H1 (cell line): ENCODE measurements at regions of chr5 and their contacts with region 1.

Region 1: DNA sequence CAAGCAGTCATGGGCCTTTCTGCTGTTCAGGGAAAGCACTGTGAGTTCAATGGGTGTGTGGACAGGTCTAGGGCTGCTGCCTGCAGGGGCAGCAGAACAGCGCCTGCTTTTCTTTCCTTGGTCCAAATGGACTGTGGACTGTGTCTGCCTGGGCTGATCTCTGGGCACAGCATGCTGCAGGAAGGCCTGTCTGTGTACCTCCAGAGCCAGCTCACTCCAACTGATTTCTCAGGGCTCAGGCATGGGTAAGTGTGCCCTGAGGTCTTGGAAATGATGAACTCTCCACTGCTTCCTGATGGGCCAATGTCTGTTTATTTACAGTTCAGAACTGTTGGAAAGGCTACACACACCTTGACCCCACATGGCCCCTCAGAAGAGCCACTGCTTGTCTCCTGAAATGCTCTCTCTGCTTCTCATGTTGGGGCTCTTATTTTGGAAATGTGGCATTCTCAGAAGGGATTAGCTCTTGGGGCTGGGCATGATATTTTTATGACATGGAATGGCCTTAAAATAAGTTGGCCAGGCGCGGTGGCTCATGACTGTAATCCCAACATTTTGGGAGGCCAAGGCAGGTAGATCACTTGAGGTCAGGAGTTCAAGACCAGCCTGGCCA is 27.0 kb downstream of the SLC22A4 start:
- DNase-seq: no peak
- H3K4me3 ChIP-seq: no peak overlapping the region
- H3K27ac ChIP-seq: no peak overlapping the region
- H3K4me1 ChIP-seq: peaks cover 5 to 10% (median 7%) of the 10 kb centered on the region in 4 experiments
- H3K27me3 ChIP-seq: no peaks in the 10 kb centered on the region
- CTCF ChIP-seq: peak in 1 of 3 experiments; percentile 4; a peak in 1 of 4 replicates
- EP300 ChIP-seq: no peak
- POLR2A ChIP-seq: no peak
- RAD21 ChIP-seq: no peak

Region 2: DNA sequence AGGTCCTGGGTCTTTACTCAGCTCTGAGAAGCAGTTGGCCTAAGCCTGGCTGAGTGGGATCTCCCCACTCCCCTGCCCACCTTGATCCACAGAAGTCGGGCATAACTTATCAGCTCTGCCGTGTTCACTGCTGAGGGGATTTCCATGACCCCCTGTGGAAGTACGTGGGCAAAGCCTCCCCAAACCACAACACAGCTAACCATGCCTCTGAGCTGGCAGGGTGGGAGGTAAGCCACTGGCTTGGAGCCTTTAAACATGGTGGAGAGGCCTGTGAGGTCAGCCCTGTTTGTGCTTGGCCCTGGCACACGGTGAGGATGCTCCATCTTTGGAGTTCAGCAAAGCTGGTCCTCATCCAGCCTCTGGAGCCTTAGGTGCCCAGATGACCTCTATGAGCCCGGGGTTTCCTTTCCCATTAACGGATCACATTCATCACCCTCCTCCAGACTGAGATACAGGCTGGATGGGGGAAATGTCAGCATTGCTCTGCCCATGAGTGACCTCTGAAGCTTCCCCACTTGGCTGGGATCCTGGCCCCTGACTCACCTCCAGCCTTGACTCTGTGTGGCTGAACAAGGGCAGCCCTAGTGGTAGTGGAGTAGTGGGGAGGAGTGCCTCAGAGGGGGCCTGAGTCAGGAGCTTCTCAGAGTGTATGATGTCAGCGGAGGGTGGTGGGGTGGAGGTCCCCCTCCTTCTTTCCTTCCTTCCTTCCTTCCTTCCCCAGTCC is 57.5 kb before region 1 on chr5:
- CTCF ChIA-PET with region 1: no interaction called
- POLR2A ChIA-PET with region 1: no interaction called
- DNase-seq: peak in 1 of 2 experiments; percentile 20
- H3K4me3 ChIP-seq: no peak overlapping the region
- H3K27ac ChIP-seq: no peak overlapping the region
- H3K4me1 ChIP-seq: peaks cover 0 to 7% (median 0%) of the 10 kb centered on the region in 4 experiments; a peak in 1 of 7 replicates
- H3K27me3 ChIP-seq: no peaks in the 10 kb centered on the region; a peak in 2 of 7 replicates
- CTCF ChIP-seq: no peak
- EP300 ChIP-seq: no peak
- POLR2A ChIP-seq: no peak
- RAD21 ChIP-seq: no peak

Region 3: DNA sequence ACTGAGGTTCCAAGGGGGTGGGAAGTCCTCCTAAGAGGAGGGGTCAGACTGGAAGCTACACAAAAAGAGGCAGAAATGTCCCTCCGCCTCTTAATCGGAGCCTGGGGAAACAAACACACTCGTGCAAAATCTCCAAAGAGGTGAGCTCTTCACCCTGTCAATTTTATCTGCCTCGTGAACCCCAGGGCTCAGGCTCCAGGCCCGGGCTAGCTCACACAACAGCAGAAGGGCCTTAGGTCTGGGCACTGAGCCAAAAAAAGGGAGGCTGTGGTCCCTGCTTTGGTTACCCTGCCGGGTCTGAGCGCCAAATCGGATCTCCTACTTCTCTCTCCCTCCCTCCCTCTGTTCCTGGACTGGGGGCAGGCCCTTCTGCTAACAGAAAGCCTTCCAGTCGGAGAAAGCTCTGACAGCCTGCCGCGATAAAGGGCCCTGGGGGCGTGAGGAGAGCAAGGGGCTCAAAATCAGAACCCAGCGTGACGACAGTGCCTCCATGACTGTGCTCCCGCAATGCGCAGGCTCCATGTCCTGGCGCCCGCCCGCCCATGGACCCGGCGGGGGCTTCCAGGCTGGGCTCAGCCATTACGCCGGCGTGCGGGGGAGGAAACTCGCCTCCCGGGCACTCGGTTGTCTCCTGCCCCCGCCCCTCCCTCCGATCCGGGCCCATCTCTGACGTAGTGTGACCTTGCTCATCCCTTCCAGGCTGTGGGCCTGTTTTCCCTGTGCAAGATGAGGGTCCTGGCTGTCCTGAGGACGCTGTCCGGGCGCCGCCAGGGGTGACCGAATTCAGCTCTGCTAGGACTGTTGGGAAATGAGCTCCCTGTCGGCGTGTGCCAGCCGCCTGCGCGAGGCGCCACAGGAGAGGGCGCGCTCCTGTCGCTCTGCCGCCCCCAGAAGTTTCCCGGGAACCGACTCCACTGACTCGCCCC is 27.9 kb before region 1 on chr5:
- CTCF ChIA-PET with region 1: interaction called, 9 read pairs
- POLR2A ChIA-PET with region 1: interaction called, 14 read pairs
- DNase-seq: peak in 1 of 2 experiments; percentile 89
- H3K4me3 ChIP-seq: peak overlapping the region; percentile 53 to 75 (median 65)
- H3K27ac ChIP-seq: peak overlapping the region; percentile 74
- H3K4me1 ChIP-seq: peaks cover 0 to 12% (median 3%) of the 10 kb centered on the region in 4 experiments; a peak in 5 of 7 replicates
- H3K27me3 ChIP-seq: peaks cover 2 to 21% (median 16%) of the 10 kb centered on the region in 4 experiments
- CTCF ChIP-seq: no peak
- EP300 ChIP-seq: peak in 1 of 2 experiments; percentile 56; a peak in 1 of 3 replicates
- POLR2A ChIP-seq: peak in 1 of 2 experiments; percentile 81; a peak in 2 of 3 replicates
- RAD21 ChIP-seq: no peak

Region 4: DNA sequence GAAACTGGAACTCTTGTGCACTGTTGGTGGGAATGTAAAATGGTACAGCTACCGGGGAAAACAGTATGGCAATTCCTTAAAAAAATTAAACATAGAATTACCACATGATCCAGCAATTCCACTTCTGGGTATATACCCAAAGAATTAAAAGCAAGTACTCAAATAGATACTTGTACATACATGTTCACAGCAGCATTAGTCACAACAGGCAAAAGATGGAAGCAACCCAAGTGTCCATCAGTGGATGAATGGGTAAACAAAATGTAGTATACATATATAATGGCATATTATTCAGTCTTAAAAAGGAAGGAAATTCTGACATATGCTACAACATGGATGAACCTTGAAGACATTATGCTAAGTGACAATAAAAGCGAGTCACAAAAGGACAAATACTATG is 40.9 kb after region 1 on chr5:
- CTCF ChIA-PET with region 1: no interaction called
- POLR2A ChIA-PET with region 1: no interaction called
- DNase-seq: no peak
- H3K4me3 ChIP-seq: no peak overlapping the region
- H3K27ac ChIP-seq: no peak overlapping the region
- H3K4me1 ChIP-seq: no peaks in the 10 kb centered on the region
- H3K27me3 ChIP-seq: no peaks in the 10 kb centered on the region
- CTCF ChIP-seq: no peak
- EP300 ChIP-seq: no peak
- POLR2A ChIP-seq: no peak
- RAD21 ChIP-seq: no peak